Tibial artery (tissue), 4 donors: ENCODE measurements at regions of chr3 and their contacts with region 1.

Region 1: GRCh38 chr3:46717447-46718231 is at the start of gene PRSS50:
- DNase-seq: peak in 1 of 2 donors; percentile 62
- H3K4me3 ChIP-seq: no peak within 1 kb of the TSS
- H3K27ac ChIP-seq: no peak within 1 kb of the TSS
- H3K4me1 ChIP-seq: peaks cover 0 to 6% (median 0%) of the 10 kb centered on the region in 4 donors
- H3K27me3 ChIP-seq: peaks cover 0 to 25% of the 10 kb centered on the region in 2 donors
- CTCF ChIP-seq: no peak

Region 2: GRCh38 chr3:46829699-46830208 is 112.1 kb after region 1 on chr3:
- intact Hi-C with region 1: loop called (anchors 10 kb)
- DNase-seq: no peak
- H3K4me3 ChIP-seq: no peak overlapping the region
- H3K27ac ChIP-seq: no peak overlapping the region
- H3K4me1 ChIP-seq: no peaks in the 10 kb centered on the region
- H3K27me3 ChIP-seq: no peaks in the 10 kb centered on the region
- CTCF ChIP-seq: no peak

Region 3: GRCh38 chr3:47152578-47152977 is 434.9 kb after region 1 on chr3:
- intact Hi-C with region 1: no loop called
- DNase-seq: no peak
- H3K4me3 ChIP-seq: no peak overlapping the region
- H3K27ac ChIP-seq: no peak overlapping the region
- H3K4me1 ChIP-seq: peaks cover 0 to 71% (median 30%) of the 10 kb centered on the region in 4 donors
- H3K27me3 ChIP-seq: no peaks in the 10 kb centered on the region
- CTCF ChIP-seq: no peak